K562 (cell line): ENCODE measurements at regions of chr2 and their contacts with region 1.

Region 1: GRCh38 chr2:12326449-12327190 is 390.1 kb upstream of the TRIB2 start:
- DNase-seq: no peak
- ATAC-seq: no peak
- H3K4me3 ChIP-seq: no peak overlapping the region
- H3K27ac ChIP-seq: no peak overlapping the region; the same call in 2 of the 3 replicates
- H3K4me1 ChIP-seq: peaks cover 5 to 12% of the 10 kb centered on the region in 2 experiments; a peak in 4 of 5 replicates
- H3K27me3 ChIP-seq: no peaks in the 10 kb centered on the region
- CTCF ChIP-seq: no peak
- EP300 ChIP-seq: no peak
- POLR2A ChIP-seq: 0 out of 2 replicates have a peak, but pooled peaks have one; percentile 24
- RAD21 ChIP-seq: no peak

Region 2: GRCh38 chr2:12116228-12116750 is 210.3 kb before region 1 on chr2:
- CTCF ChIA-PET with region 1: no interaction called
- POLR2A ChIA-PET with region 1: no interaction called
- in situ Hi-C with region 1: no loop called
- intact Hi-C with region 1: no loop called
- DNase-seq: no peak
- ATAC-seq: no peak
- H3K4me3 ChIP-seq: no peak overlapping the region
- H3K27ac ChIP-seq: no peak overlapping the region
- H3K4me1 ChIP-seq: no peaks in the 10 kb centered on the region
- H3K27me3 ChIP-seq: no peaks in the 10 kb centered on the region
- CTCF ChIP-seq: no peak
- EP300 ChIP-seq: no peak
- POLR2A ChIP-seq: no peak
- RAD21 ChIP-seq: no peak

Region 3: GRCh38 chr2:12340164-12340563 is 13.5 kb after region 1 on chr2:
- CTCF ChIA-PET with region 1: no interaction called
- POLR2A ChIA-PET with region 1: interaction called, 10 read pairs
- in situ Hi-C with region 1: no loop called
- intact Hi-C with region 1: no loop called
- DNase-seq: no peak
- ATAC-seq: no peak
- H3K4me3 ChIP-seq: no peak overlapping the region
- H3K27ac ChIP-seq: no peak overlapping the region
- H3K4me1 ChIP-seq: no peaks in the 10 kb centered on the region; a peak in 1 of 5 replicates
- H3K27me3 ChIP-seq: no peaks in the 10 kb centered on the region
- CTCF ChIP-seq: no peak
- EP300 ChIP-seq: no peak
- POLR2A ChIP-seq: no peak
- RAD21 ChIP-seq: no peak